ENCODE measurements at regions of chr6 and their contacts with region 1.

Region 1: DNA sequence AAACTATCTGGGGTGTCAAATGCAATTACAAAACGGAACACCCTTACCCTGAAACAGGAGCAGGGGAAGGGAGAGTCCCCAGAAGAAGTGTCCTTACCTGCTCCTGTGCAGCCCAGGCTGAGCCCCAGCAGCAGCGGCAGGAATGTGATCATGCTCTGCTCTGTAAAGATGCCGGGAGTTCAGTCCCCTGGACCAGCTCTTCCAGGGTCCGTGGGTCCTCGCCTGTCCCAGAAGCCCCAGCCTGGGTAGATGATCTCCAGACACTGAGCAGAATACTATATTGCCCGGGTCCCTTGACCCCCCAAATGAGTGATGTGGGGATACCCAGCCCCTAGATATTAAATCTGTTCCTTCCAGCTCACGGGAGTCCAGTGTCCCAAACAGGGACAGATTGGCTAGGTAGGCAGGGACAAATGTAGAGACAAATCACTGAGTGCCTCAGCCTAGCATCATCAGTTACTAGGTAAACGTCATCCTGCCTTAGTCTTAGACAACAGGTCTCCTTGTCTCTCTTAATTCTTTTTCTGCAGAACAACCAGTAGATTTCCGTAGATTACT is at the start of gene HLA-DMB:
- DNase-seq: peak; percentile 64
- H3K4me3 Mint-ChIP-seq: peak within 1 kb of the TSS; percentile 83
- H3K27ac Mint-ChIP-seq: peak within 1 kb of the TSS; percentile 97
- H3K4me1 Mint-ChIP-seq: peaks cover 66% of the 10 kb centered on the region
- H3K27me3 Mint-ChIP-seq: peaks cover 6% of the 10 kb centered on the region

Region 2: GRCh38 chr6:32885698-32886286 is 54.9 kb before region 1 on chr6:
- CTCF ChIA-PET with region 1: interaction called, 10 read pairs
- DNase-seq: no peak
- H3K4me3 Mint-ChIP-seq: no peak overlapping the region
- H3K27ac Mint-ChIP-seq: no peak overlapping the region
- H3K4me1 Mint-ChIP-seq: no peaks in the 10 kb centered on the region
- H3K27me3 Mint-ChIP-seq: peaks cover 23% of the 10 kb centered on the region

Region 3: GRCh38 chr6:32971581-32972352 is 31.0 kb after region 1 on chr6:
- CTCF ChIA-PET with region 1: interaction called, 12 read pairs
- DNase-seq: peak; percentile 99
- H3K4me3 Mint-ChIP-seq: peak overlapping the region; percentile 85
- H3K27ac Mint-ChIP-seq: peak overlapping the region; percentile 97
- H3K4me1 Mint-ChIP-seq: peaks cover 25% of the 10 kb centered on the region
- H3K27me3 Mint-ChIP-seq: peaks cover 10% of the 10 kb centered on the region